Mammary epithelial cell (primary cell): ENCODE measurements at regions of chr3 and their contacts with region 1.

Region 1: DNA sequence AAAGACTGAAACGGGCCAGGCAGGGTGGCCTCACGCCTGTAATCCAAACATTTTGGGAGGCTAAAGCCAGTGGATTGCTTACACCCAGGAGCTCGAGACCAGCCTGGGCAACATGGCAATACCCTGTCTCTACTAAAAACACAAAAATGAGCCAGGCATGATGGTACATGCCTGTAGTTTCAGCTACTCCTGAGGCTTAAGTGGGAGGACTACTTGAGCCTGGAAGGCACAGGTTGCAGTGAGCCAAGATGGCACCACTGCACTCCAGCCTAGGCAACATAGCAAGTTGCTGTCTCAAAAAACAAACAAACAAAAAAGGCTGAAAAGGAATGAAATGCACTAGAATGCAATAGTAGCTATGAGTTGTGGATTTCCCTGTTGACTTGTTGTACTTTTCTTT is 94.7 kb downstream of the STAG1 start:
- DNase-seq: peak; percentile 42
- H3K4me3 ChIP-seq: no peak overlapping the region
- H3K27ac ChIP-seq: no peak overlapping the region
- H3K4me1 ChIP-seq: peaks cover 6% of the 10 kb centered on the region
- H3K27me3 ChIP-seq: no peaks in the 10 kb centered on the region
- CTCF ChIP-seq: no peak

Region 2: GRCh38 chr3:136698361-136698760 is 40.8 kb after region 1 on chr3:
- CTCF ChIA-PET with region 1: interaction called, 20 read pairs
- dilution Hi-C with region 1: no loop called
- in situ Hi-C with region 1: no loop called
- intact Hi-C with region 1: no loop called
- DNase-seq: no peak
- H3K4me3 ChIP-seq: no peak overlapping the region
- H3K27ac ChIP-seq: no peak overlapping the region
- H3K4me1 ChIP-seq: no peaks in the 10 kb centered on the region
- H3K27me3 ChIP-seq: no peaks in the 10 kb centered on the region
- CTCF ChIP-seq: no peak